Right ventricle myocardium inferior (tissue), 1 donor: ENCODE measurements at regions of chr14 and their contacts with region 1.

Region 1: GRCh38 chr14:39102969-39103957 is at the start of gene SEC23A:
- DNase-seq: peak; percentile 97
- ATAC-seq: peak; percentile 98
- total RNA-seq, gene SEC23A: 86.0 TPM

Region 2: DNA sequence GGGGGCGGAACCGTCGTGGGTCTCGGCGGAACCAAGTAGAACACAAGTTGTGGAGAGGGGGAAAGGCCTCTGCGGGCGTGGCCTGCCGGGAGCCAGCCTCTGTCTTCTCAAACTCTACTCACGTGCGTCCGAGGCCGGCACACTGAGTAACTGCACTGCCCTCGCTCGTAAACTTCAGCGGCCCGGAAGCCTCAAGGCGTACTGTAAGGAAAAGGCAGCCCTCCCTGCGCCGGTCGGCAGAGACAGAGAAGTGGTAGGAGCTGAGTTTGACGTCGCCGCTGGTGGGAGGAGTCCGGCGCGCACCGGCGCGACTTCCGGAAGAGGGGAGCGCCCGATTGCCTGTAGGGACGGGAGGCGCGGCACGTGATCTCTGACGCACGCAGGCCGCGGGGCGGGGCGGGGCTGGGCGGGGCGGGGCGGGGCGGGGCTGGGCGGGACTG is 328.9 kb after region 1 on chr14 and contains the start of gene FBXO33:
- intact Hi-C with region 1: loop called (anchors 2 kb)
- DNase-seq: peak; percentile 98
- ATAC-seq: peak; percentile 96
- total RNA-seq, gene FBXO33: 4.0 TPM